HEK293T (cell line): ENCODE measurements at regions of chr15 and their contacts with region 1.

Region 1: GRCh38 chr15:70017796-70018195 is 79.9 kb downstream of the TLE3 start:
- DNase-seq: no peak

Region 2: GRCh38 chr15:69225355-69226025 is 792.3 kb before region 1 on chr15:
- CTCF ChIA-PET with region 1: interaction called, 10 read pairs
- POLR2A ChIA-PET with region 1: no interaction called
- DNase-seq: peak; percentile 18